ENCODE measurements at regions of chrX and their contacts with region 1.

Region 1: DNA sequence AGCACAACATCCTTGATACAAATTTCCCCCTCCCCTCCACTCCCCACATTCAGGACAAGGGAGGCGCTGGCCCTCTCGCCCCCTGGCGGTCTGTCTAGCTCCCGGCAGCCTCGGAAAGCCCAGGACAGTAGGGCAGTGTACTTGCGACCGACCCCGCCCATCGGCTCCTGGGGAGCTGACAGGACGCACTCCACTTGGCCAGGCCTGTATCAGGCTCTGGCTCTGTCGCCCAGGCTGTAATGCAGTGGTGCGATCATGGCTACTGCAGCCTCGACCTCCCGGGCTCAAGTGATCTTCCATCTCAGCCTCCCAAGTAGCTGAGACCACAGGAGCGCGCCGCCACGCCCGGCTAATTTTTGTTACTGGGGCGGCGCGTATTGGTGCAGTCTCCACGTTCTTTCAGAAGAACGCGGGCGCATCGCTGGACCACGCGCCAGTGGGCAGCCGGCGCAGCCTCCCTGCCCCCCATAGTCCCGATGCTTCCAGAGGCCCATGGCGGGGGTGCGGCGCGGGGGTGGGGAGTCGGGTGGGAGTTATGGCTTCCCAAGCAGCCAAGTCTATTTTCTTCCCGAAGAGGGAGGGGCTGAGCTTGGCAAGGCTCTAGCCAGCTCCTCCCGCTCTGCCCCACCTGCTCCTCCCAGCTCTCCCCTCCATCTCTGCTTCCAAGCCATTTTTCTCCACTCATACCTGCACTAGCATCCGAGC is 7.8 kb upstream of the AKAP14 start:
- H3K4me3 ChIP-seq: peak overlapping the region; percentile 30
- H3K27ac ChIP-seq: no peak overlapping the region; the same call in 1 of the 2 replicates
- H3K4me1 ChIP-seq: no peaks in the 10 kb centered on the region
- CTCF ChIP-seq: peak; percentile 82

Region 2: DNA sequence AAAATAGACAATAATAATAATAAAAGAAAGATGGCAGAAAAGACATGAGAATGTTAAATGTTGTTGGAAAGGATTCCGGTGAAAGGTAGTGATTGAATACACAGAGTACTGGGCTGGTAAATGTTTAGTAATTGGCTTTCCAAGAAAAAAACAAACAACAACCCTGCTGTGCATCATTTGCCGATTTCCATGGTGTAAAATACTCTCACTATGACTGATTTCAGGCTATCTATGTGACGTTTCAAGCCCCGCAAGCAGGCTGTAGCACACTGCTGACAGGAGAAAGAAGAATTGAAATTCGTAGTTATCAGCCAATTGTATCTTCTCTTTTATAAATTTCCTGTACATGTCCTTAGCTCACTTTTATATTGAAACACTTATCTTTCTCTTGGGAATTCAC is 181.3 kb before region 1 on chrX:
- CTCF ChIA-PET with region 1: no interaction called
- POLR2A ChIA-PET with region 1: no interaction called
- H3K4me3 ChIP-seq: no peak overlapping the region
- H3K27ac ChIP-seq: no peak overlapping the region
- H3K4me1 ChIP-seq: no peaks in the 10 kb centered on the region
- CTCF ChIP-seq: no peak

Region 3: DNA sequence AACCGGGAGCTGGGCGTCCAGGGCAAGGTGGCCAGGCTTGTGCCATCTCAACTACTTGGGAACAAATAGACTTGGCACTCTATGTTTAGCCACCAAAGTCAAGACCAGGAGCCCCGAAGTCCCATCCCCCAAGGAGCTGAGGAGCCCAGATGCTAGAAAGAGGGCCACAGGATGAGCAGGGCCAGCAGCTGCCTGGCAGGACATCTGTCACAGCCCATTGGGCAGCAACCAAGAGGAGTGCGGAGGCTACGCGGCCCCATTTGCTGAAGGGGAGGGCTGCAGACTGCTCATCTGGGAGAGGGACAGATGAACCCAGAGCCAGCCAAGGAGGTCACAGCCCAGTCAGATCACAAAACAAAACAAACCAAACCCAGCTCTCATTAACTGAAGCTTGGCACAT is 152.4 kb before region 1 on chrX:
- CTCF ChIA-PET with region 1: no interaction called
- POLR2A ChIA-PET with region 1: no interaction called
- H3K4me3 ChIP-seq: no peak overlapping the region
- H3K27ac ChIP-seq: no peak overlapping the region
- H3K4me1 ChIP-seq: no peaks in the 10 kb centered on the region
- CTCF ChIP-seq: no peak

Region 4: GRCh38 chrX:119899125-119899524 is 11.3 kb after region 1 on chrX:
- CTCF ChIA-PET with region 1: interaction called, 11 read pairs
- POLR2A ChIA-PET with region 1: interaction called, 3 read pairs
- H3K4me3 ChIP-seq: no peak overlapping the region
- H3K27ac ChIP-seq: no peak overlapping the region
- H3K4me1 ChIP-seq: no peaks in the 10 kb centered on the region
- CTCF ChIP-seq: no peak